Activated CD8-positive, alpha-beta T cell treated with anti-CD3 and anti-CD28 coated beads for 36 hours (primary cell): ENCODE measurements at regions of chr4 and their contacts with region 1.

Region 1: DNA sequence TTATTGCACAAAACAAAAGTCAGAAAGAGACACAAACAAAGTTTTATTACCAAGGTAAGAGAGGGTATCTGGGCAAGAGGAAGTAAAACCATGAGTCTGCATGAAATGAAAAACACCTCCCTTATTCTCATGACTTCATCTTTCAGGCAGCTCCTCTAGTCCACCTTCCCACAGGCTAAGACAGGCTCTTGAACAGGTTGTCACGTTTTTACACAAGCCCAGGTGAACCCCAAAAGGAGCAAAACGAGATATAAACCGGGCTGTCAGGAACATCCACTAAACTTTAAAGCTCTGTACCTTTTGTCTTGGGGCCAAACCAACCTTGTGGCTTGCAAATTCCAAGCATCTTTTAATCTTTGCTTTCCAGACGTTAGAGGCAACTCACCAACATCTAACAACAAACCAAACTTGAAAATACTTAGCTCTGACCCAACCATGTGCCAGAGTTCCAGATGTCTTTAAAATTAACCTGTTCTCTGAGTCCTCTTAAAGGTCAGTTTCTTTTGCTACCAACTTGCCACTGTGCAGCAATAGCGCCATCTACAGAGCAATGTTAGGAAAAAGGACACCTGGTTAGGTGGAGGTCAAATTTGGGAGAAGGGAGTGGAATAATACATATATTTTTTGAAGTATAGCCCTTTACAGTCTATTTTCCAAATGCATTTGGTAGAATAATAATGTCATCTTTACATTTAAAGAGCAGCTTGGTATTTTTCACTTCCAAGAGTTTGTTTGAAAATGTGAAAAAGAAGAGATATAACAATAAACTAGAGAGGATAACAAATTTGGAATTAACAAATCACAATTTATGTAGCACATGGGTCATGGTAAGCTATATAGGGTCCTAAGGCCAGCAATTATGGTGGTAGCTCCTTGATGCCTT is 73.1 kb downstream of the QRFPR start:
- DNase-seq: peak; percentile 69
- ATAC-seq: peak; percentile 80
- H3K4me3 Mint-ChIP-seq: no peak overlapping the region
- H3K27ac Mint-ChIP-seq: peak overlapping the region; percentile 50
- H3K4me1 Mint-ChIP-seq: peaks cover 12% of the 10 kb centered on the region
- H3K27me3 Mint-ChIP-seq: no peaks in the 10 kb centered on the region
- CTCF ChIP-seq: peak; percentile 93

Region 2: GRCh38 chr4:121164291-121164690 is 143.4 kb before region 1 on chr4 and contains the start of gene TNIP3:
- CTCF ChIA-PET with region 1: interaction called, 12 read pairs
- POLR2A ChIA-PET with region 1: no interaction called
- intact Hi-C with region 1: no loop called
- DNase-seq: no peak
- ATAC-seq: no peak
- H3K4me3 Mint-ChIP-seq: no peak within 1 kb of the TSS
- H3K27ac Mint-ChIP-seq: no peak within 1 kb of the TSS
- H3K4me1 Mint-ChIP-seq: peaks cover 34% of the 10 kb centered on the region
- H3K27me3 Mint-ChIP-seq: no peaks in the 10 kb centered on the region
- CTCF ChIP-seq: no peak
- total RNA-seq, gene TNIP3: 1.9 to 2.4 TPM

Region 3: GRCh38 chr4:121199742-121200561 is 107.7 kb before region 1 on chr4:
- CTCF ChIA-PET with region 1: interaction called, 47 read pairs
- POLR2A ChIA-PET with region 1: no interaction called
- intact Hi-C with region 1: no loop called
- DNase-seq: peak; percentile 65
- ATAC-seq: peak; percentile 93
- H3K4me3 Mint-ChIP-seq: peak overlapping the region; percentile 41
- H3K27ac Mint-ChIP-seq: peak overlapping the region; percentile 86
- H3K4me1 Mint-ChIP-seq: peaks cover 29% of the 10 kb centered on the region
- H3K27me3 Mint-ChIP-seq: no peaks in the 10 kb centered on the region
- CTCF ChIP-seq: no peak

Region 4: DNA sequence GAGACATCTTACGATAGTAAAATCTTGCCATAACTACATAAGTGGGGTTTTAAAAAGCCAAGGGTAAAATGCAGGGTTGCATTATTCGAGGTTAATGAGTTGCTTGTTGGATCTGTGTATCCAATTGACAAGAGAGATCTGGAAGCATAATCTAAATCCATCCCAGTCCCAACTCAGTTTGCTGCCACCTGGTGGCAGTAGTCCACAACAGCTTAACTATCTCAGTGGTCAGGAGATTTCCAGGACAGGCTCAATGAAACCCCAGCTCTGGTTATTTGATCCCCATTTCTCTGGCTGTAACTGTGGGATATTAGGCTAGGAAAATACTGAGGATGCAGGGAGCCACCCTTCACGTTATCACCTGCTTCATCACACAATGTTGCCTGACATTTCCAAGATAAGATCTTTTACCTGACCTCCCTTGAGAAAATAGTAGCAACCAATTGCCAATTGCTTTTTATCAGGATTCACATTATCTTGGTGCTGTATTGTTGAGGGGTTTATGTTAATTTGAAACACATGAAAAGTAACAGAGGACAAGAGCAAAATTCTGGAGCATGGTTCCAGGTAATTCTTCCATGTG is 55.4 kb before region 1 on chr4:
- CTCF ChIA-PET with region 1: interaction called, 6 read pairs
- POLR2A ChIA-PET with region 1: no interaction called
- intact Hi-C with region 1: loop called (anchors 5 kb)
- DNase-seq: peak; percentile 75
- ATAC-seq: no peak
- H3K4me3 Mint-ChIP-seq: no peak overlapping the region
- H3K27ac Mint-ChIP-seq: no peak overlapping the region
- H3K4me1 Mint-ChIP-seq: peaks cover 57% of the 10 kb centered on the region
- H3K27me3 Mint-ChIP-seq: no peaks in the 10 kb centered on the region
- CTCF ChIP-seq: peak; percentile 87

Region 5: GRCh38 chr4:121278811-121279368 is 28.8 kb before region 1 on chr4:
- CTCF ChIA-PET with region 1: interaction called, 35 read pairs
- POLR2A ChIA-PET with region 1: no interaction called
- intact Hi-C with region 1: no loop called
- DNase-seq: no peak
- ATAC-seq: peak; percentile 64
- H3K4me3 Mint-ChIP-seq: no peak overlapping the region
- H3K27ac Mint-ChIP-seq: no peak overlapping the region
- H3K4me1 Mint-ChIP-seq: peaks cover 7% of the 10 kb centered on the region
- H3K27me3 Mint-ChIP-seq: peaks cover 4% of the 10 kb centered on the region
- CTCF ChIP-seq: no peak

Region 6: DNA sequence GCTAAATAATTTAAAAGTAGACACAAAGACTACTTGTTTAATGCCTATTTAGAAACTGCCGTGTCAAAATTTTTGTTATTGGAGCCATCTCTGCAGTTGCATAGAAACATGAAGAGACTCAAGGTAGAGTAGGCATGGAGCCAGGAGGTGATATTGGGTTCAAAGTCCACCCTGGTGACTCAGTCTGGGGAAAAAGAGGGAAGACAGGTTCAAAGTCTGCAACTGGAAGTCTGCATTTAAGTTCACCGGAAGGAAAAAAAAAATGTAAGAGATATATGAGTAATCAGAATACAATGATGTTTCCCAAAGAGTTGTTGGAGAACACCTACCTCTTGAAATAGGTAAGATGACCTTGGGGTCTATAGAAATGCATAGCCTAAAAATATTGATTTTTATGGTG is 140.5 kb after region 1 on chr4:
- CTCF ChIA-PET with region 1: no interaction called
- POLR2A ChIA-PET with region 1: no interaction called
- intact Hi-C with region 1: no loop called
- DNase-seq: no peak
- ATAC-seq: no peak
- H3K4me3 Mint-ChIP-seq: no peak overlapping the region
- H3K27ac Mint-ChIP-seq: no peak overlapping the region
- H3K4me1 Mint-ChIP-seq: no peaks in the 10 kb centered on the region
- H3K27me3 Mint-ChIP-seq: peaks cover 3% of the 10 kb centered on the region
- CTCF ChIP-seq: no peak